Lower lobe of right lung (tissue), 2 donors: ENCODE measurements at regions of chr9 and their contacts with region 1.

Region 1: GRCh38 chr9:73104921-73105320 is 46.7 kb upstream of the ANXA1 start:
- DNase-seq: no peak
- ATAC-seq: no peak
- H3K4me3 ChIP-seq: no peak overlapping the region
- H3K27ac ChIP-seq: no peak overlapping the region
- H3K4me1 ChIP-seq: no peaks in the 10 kb centered on the region
- H3K27me3 ChIP-seq: no peaks in the 10 kb centered on the region
- CTCF ChIP-seq: no peak

Region 2: DNA sequence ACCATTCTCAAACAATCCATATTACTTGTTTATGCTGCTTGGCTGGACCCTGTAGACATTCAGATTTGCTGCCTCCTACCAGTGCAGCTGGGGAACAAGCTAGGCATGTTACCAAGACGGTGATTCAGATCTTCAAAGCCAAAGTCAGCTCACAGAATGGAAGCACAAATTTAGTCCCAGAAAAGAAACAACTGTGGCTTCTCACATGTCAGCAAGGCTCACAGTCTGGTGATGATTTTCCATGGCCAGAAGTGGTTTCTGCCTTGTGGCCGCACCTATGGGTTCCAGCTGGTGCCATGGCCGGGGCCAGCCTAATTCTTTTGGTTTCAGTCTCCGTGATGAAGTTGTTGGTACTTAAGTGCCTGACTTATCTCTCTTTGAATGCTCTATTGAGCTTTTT is 401.3 kb before region 1 on chr9:
- intact Hi-C with region 1: no loop called
- DNase-seq: no peak
- ATAC-seq: no peak
- H3K4me3 ChIP-seq: no peak overlapping the region
- H3K27ac ChIP-seq: no peak overlapping the region
- H3K4me1 ChIP-seq: no peaks in the 10 kb centered on the region
- H3K27me3 ChIP-seq: no peaks in the 10 kb centered on the region
- CTCF ChIP-seq: no peak

Region 3: GRCh38 chr9:73183917-73184861 is 79.3 kb after region 1 on chr9:
- intact Hi-C with region 1: loop called (anchors 5 kb)
- DNase-seq: no peak
- ATAC-seq: peak; percentile 56 to 58
- H3K4me3 ChIP-seq: no peak overlapping the region
- H3K27ac ChIP-seq: no peak overlapping the region
- H3K4me1 ChIP-seq: no peaks in the 10 kb centered on the region
- H3K27me3 ChIP-seq: no peaks in the 10 kb centered on the region
- CTCF ChIP-seq: peak; percentile 61